Activated naive CD4-positive, alpha-beta T cell treated with anti-CD3 and anti-CD28 coated beads for 36 hours (primary cell): ENCODE measurements at regions of chr20 and their contacts with region 1.

Region 1: GRCh38 chr20:63627129-63627750 is 339 bp upstream of the GMEB2 start:
- DNase-seq: peak; percentile 94
- H3K4me3 Mint-ChIP-seq: peak overlapping the region; percentile 99
- H3K27ac Mint-ChIP-seq: peak overlapping the region; percentile 74
- H3K4me1 Mint-ChIP-seq: peaks cover 52% of the 10 kb centered on the region
- H3K27me3 Mint-ChIP-seq: no peaks in the 10 kb centered on the region

Region 2: DNA sequence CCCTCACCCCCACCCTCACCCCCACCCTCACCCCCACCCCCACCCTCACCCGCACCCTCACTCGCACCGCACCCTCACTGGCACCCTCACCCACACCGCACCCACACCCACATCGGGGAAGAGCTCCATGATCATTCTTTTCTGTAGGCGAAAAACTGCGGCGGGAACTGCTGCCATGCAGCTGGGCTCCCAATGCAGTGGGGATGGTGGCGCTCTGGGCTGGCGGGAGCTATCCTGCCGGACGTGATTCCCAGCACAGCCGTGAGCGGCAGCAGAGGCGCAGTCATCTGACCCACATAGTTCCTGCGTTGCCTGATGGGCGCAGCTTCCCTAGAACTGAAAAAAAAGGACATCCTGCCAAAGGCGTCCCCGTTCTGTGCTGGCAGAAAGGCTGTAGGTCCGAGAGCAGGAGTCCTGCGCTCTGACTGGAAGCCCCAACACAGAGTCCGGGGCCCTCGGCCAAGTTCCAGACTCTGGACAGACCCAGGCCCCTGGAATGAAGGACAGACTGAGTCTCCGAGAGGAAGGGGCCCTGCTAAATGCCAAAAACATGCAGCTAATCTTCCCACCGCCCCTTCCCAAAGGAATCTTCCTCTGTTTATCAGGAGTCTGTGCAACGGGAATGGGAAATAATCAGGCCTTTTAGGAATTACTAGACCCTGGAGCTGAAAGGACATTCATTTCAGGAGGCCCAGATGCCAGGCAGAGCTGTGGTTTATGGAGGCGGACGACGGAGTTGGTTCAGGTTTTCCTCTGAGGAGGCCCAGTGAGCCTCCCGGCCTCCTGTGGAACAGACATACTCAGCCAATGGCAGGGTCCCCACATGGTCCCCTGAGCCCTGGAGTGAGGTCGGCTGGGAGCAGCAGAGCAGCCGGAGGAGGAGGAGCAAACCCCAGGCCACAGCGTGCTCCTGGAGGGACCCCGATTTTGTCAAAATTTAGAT is 751.5 kb before region 1 on chr20:
- CTCF ChIA-PET with region 1: no interaction called
- intact Hi-C with region 1: no loop called
- DNase-seq: peak; percentile 23
- H3K4me3 Mint-ChIP-seq: no peak overlapping the region
- H3K27ac Mint-ChIP-seq: no peak overlapping the region
- H3K4me1 Mint-ChIP-seq: peaks cover 17% of the 10 kb centered on the region
- H3K27me3 Mint-ChIP-seq: no peaks in the 10 kb centered on the region

Region 3: GRCh38 chr20:63641792-63642544 is 14.7 kb after region 1 on chr20:
- CTCF ChIA-PET with region 1: interaction called, 3 read pairs
- intact Hi-C with region 1: loop called (anchors 1 kb)
- DNase-seq: peak; percentile 95
- H3K4me3 Mint-ChIP-seq: peak overlapping the region; percentile 76
- H3K27ac Mint-ChIP-seq: no peak overlapping the region
- H3K4me1 Mint-ChIP-seq: peaks cover 33% of the 10 kb centered on the region
- H3K27me3 Mint-ChIP-seq: no peaks in the 10 kb centered on the region

Region 4: DNA sequence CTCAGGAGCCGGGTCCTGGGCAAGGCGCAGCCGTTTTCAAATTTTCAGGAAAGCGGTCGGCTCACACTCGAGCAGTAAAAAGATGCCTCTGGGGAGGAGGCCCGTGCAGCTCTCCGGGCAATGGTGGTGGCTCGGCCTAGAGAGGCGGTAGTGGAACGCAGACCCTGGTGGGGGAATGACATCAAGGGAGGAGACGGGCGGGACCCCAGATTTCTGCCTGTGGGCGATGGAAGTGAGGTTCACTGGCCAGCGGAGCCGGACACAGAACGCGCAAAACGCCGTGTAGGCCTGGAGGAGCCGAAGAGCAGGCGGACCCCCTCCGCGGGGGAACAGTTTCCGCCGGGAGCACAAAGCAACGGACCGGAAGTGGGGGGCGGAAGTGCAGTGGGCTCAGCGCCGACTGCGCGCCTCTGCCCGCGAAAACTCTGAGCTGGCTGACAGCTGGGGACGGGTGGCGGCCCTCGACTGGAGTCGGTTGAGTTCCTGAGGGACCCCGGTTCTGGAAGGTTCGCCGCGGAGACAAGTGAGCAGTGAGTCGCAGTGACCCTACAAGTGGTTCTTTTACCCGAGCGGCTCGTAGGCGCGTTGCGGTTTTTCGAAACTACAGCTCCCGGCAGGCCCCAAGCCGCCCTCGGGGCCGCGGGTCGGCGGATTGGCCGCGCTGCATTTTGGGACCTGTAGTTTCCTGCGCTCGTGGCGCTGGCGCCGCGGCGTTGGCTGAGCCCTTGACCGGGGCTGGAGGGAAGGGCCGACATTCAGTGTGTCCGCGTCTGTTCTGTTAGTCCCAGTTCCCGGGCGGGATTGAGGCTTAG is 30.9 kb after region 1 on chr20 and contains the start of gene RTEL1:
- CTCF ChIA-PET with region 1: no interaction called
- intact Hi-C with region 1: loop called (anchors 2 kb)
- DNase-seq: peak; percentile 88
- H3K4me3 Mint-ChIP-seq: peak within 1 kb of the TSS; percentile 98
- H3K27ac Mint-ChIP-seq: peak within 1 kb of the TSS; percentile 93
- H3K4me1 Mint-ChIP-seq: peaks cover 38% of the 10 kb centered on the region
- H3K27me3 Mint-ChIP-seq: no peaks in the 10 kb centered on the region
- total RNA-seq, gene RTEL1: 33.6 to 34.8 TPM

Region 5: GRCh38 chr20:63739130-63740069 is 112.2 kb after region 1 on chr20 and contains the start of gene SLC2A4RG:
- CTCF ChIA-PET with region 1: no interaction called
- intact Hi-C with region 1: loop called (anchors 5 kb)
- DNase-seq: peak; percentile 58
- H3K4me3 Mint-ChIP-seq: peak within 1 kb of the TSS; percentile 50
- H3K27ac Mint-ChIP-seq: no peak within 1 kb of the TSS
- H3K4me1 Mint-ChIP-seq: peaks cover 22% of the 10 kb centered on the region
- H3K27me3 Mint-ChIP-seq: no peaks in the 10 kb centered on the region
- total RNA-seq, gene SLC2A4RG: 22.4 to 24.8 TPM